ENCODE measurements at regions of chr1 and their contacts with region 1.

Region 1: DNA sequence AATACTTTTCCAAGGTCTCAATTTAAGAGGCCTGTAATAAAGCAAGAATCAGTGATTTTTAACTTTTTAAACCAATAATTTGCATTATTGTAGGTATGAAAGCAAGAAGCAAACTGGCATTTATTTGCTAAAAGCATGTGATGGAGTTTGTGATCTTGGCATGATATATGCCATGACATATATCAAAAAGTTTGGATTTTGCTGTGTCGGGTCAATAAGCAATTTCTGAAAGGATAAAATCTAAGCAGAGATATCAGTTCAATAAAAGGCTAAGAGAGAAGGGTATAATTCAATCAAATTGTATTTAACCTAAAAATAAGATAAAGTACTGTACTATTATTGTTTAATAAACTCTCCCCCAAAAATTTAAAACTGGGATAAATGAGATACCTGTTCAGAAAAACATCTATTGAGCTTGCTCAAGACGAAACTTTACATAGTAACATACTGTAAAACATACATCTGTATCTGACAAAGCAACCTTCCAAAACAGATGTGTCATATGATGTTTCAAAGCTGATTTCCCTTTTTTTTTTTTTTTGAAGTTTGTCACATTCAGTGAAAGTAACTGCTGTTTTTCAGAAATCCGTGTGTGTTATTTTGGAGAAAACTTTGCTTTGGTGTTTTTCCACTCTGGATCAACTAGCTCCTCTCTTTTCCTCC is 74.5 kb downstream of the TGFBR3 start:
- DNase-seq: no peak
- ATAC-seq: no peak
- H3K4me3 ChIP-seq: no peak overlapping the region
- H3K4me3 Mint-ChIP-seq: no peak overlapping the region
- H3K27ac ChIP-seq: no peak overlapping the region
- H3K27ac Mint-ChIP-seq: peak overlapping the region in 7 of 9 donors; percentile 17 to 80 (median 59)
- H3K4me1 ChIP-seq: peaks cover 5 to 15% of the 10 kb centered on the region in 2 donors
- H3K4me1 Mint-ChIP-seq: peaks cover 20 to 70% (median 36%) of the 10 kb centered on the region in 7 donors
- H3K27me3 ChIP-seq: no peaks in the 10 kb centered on the region
- H3K27me3 Mint-ChIP-seq: peaks cover 0 to 7% (median 0%) of the 10 kb centered on the region in 5 donors

Region 2: GRCh38 chr1:91673613-91674012 is 137.9 kb before region 1 on chr1:
- CTCF ChIA-PET with region 1: no interaction called
- POLR2A ChIA-PET with region 1: no interaction called
- intact Hi-C with region 1: no loop called
- DNase-seq: no peak
- ATAC-seq: no peak
- H3K4me3 ChIP-seq: no peak overlapping the region
- H3K4me3 Mint-ChIP-seq: no peak overlapping the region
- H3K27ac ChIP-seq: no peak overlapping the region
- H3K27ac Mint-ChIP-seq: no peak overlapping the region
- H3K4me1 ChIP-seq: no peaks in the 10 kb centered on the region
- H3K4me1 Mint-ChIP-seq: peaks cover 0 to 32% (median 9%) of the 10 kb centered on the region in 7 donors
- H3K27me3 ChIP-seq: no peaks in the 10 kb centered on the region
- H3K27me3 Mint-ChIP-seq: no peaks in the 10 kb centered on the region

Region 3: GRCh38 chr1:91830242-91831131 is 19.0 kb after region 1 on chr1:
- CTCF ChIA-PET with region 1: no interaction called
- POLR2A ChIA-PET with region 1: no interaction called
- intact Hi-C with region 1: no loop called
- DNase-seq: no peak
- ATAC-seq: no peak
- H3K4me3 ChIP-seq: no peak overlapping the region
- H3K4me3 Mint-ChIP-seq: peak overlapping the region in 2 of 10 donors; percentile 9 to 51
- H3K27ac ChIP-seq: no peak overlapping the region
- H3K27ac Mint-ChIP-seq: peak overlapping the region in 5 of 9 donors; percentile 2 to 83 (median 18)
- H3K4me1 ChIP-seq: peaks cover 0 to 8% of the 10 kb centered on the region in 2 donors
- H3K4me1 Mint-ChIP-seq: peaks cover 11 to 48% (median 17%) of the 10 kb centered on the region in 7 donors
- H3K27me3 ChIP-seq: no peaks in the 10 kb centered on the region
- H3K27me3 Mint-ChIP-seq: peaks cover 0 to 2% (median 0%) of the 10 kb centered on the region in 5 donors

Region 4: DNA sequence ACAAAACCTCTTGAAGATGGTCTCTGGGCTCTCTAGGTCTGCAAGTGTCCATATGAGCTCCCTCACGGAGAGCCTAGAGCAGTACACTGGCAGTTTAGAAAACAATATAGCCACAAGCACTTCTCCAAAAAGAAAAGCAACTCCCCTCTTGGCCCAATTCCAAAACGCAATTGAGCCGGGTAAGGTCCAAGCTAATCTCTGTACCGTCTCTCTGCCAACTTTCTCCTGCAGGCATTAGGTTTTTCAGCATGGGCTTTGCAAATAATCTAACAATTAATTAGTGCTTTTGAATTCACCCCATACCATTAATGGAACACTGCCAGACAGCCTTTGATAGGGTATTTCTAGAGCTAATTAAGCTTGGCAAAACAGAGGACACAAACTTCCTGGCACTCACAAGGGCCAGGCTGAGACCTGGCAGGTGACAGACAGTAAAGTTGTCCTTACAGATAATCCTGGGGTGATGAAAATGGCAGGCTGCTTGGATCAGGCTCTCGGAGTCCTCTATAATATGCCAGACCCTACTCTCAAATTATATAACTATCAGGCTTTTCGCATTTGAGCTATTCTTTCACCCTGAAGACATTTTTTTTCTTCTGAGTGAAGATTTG is 34.6 kb after region 1 on chr1:
- CTCF ChIA-PET with region 1: no interaction called
- POLR2A ChIA-PET with region 1: no interaction called
- intact Hi-C with region 1: loop called in 1 of 2 experiments (anchors 5 kb)
- DNase-seq: no peak
- ATAC-seq: no peak
- H3K4me3 ChIP-seq: no peak overlapping the region
- H3K4me3 Mint-ChIP-seq: no peak overlapping the region
- H3K27ac ChIP-seq: no peak overlapping the region
- H3K27ac Mint-ChIP-seq: no peak overlapping the region
- H3K4me1 ChIP-seq: peaks cover 0 to 6% of the 10 kb centered on the region in 2 donors
- H3K4me1 Mint-ChIP-seq: peaks cover 0 to 36% (median 10%) of the 10 kb centered on the region in 7 donors
- H3K27me3 ChIP-seq: no peaks in the 10 kb centered on the region
- H3K27me3 Mint-ChIP-seq: peaks cover 0 to 3% (median 0%) of the 10 kb centered on the region in 5 donors

Measured in naive thymus-derived CD4-positive, alpha-beta T cell (primary cell).